ENCODE measurements at regions of chr16 and their contacts with region 1.

Region 1: GRCh38 chr16:53130159-53131049 is 75.6 kb downstream of the CHD9 start:
- DNase-seq: peak; percentile 95
- ATAC-seq: peak; percentile 95
- H3K4me3 Mint-ChIP-seq: peak overlapping the region; percentile 79
- H3K27ac Mint-ChIP-seq: peak overlapping the region; percentile 54
- H3K4me1 Mint-ChIP-seq: peaks cover 20% of the 10 kb centered on the region
- H3K27me3 Mint-ChIP-seq: no peaks in the 10 kb centered on the region

Region 2: DNA sequence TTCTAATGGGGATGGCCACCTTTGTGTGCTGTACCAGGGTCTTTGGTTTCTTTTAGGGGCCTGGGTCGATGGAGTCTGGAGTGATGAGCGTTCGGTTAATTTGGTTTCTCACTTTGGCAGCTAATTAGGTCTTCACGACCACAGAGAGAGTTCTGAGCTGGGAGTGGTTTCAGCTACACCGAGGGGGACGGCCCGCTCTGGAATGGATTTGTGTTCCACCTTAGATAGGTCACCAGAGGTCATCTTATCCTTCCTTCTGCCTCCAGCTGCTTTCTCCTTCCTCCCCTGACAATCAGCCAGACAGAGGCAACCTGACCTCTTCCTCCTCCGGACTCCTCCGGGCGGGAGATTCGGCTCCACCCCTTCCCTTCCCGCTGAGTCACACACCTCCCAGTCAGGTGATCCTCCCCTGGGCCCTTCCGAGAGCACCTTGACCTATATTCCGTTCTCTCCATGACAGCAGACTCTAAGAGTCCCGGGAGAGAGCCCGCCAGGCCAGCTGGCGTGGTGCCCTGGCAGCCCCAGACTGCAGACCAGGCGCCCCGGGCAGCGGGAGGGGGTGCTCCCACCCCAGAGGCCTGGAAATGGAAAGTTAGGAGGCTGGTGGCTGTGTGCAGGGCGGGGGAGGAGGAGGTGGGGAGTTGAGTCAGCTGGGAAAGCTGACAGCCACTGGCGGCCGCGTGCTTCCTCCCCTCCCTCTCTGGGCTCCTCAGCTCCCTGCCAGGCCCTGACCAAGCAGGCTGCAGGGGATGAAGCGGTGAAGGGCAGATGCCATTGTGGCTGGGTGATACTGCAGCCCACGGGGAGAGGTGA is 30.9 kb before region 1 on chr16:
- CTCF ChIA-PET with region 1: interaction called, 14 read pairs
- DNase-seq: peak; percentile 80
- ATAC-seq: peak; percentile 70
- H3K4me3 Mint-ChIP-seq: peak overlapping the region; percentile 68
- H3K27ac Mint-ChIP-seq: peak overlapping the region; percentile 86
- H3K4me1 Mint-ChIP-seq: peaks cover 29% of the 10 kb centered on the region
- H3K27me3 Mint-ChIP-seq: no peaks in the 10 kb centered on the region